Dendritic cell treated with granulocyte-macrophage colony-stimulating factor and Interleukin-4, amounts not matched to agents 40 ng/mL and 50 ng/mL, for 4 days (primary cell): ENCODE measurements at regions of chr11 and their contacts with region 1.

Region 1: GRCh38 chr11:30346068-30346688 is 23.3 kb downstream of the ARL14EP start:
- H3K4me3 Mint-ChIP-seq: no peak overlapping the region
- H3K27ac Mint-ChIP-seq: no peak overlapping the region
- H3K4me1 Mint-ChIP-seq: peaks cover 13% of the 10 kb centered on the region
- H3K27me3 Mint-ChIP-seq: no peaks in the 10 kb centered on the region

Region 2: GRCh38 chr11:30328681-30329080 is 17.5 kb before region 1 on chr11:
- intact Hi-C with region 1: loop called (anchors 2 kb)
- H3K4me3 Mint-ChIP-seq: no peak overlapping the region
- H3K27ac Mint-ChIP-seq: no peak overlapping the region
- H3K4me1 Mint-ChIP-seq: peaks cover 23% of the 10 kb centered on the region
- H3K27me3 Mint-ChIP-seq: no peaks in the 10 kb centered on the region

Region 3: DNA sequence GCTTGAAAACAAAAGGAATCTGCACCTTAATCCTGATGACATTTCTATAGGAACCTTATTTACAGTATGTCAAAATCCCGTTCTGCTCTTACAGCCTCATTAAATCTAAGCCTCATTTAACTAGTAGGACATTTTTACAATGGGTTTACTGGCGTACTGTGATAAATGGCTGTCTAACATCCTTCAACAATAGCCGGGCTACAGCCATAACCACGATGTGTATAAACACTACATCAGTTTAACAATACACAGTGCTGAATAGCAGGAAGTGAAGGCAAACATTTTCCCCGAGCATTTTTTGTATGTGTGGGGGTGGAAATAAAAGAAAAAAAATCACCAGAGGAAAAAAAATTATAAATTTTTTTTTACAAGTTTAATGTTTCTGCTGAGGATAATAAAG is 108.0 kb after region 1 on chr11:
- intact Hi-C with region 1: loop called (anchors 10 kb)
- H3K4me3 Mint-ChIP-seq: no peak overlapping the region
- H3K27ac Mint-ChIP-seq: peak overlapping the region; percentile 37
- H3K4me1 Mint-ChIP-seq: peaks cover 46% of the 10 kb centered on the region
- H3K27me3 Mint-ChIP-seq: peaks cover 14% of the 10 kb centered on the region

Region 4: GRCh38 chr11:30635401-30635989 is 289.3 kb after region 1 on chr11:
- intact Hi-C with region 1: no loop called
- H3K4me3 Mint-ChIP-seq: no peak overlapping the region
- H3K27ac Mint-ChIP-seq: no peak overlapping the region
- H3K4me1 Mint-ChIP-seq: no peaks in the 10 kb centered on the region
- H3K27me3 Mint-ChIP-seq: no peaks in the 10 kb centered on the region

Region 5: GRCh38 chr11:30855383-30856006 is 509.3 kb after region 1 on chr11:
- intact Hi-C with region 1: loop called (anchors 2 kb)
- H3K4me3 Mint-ChIP-seq: no peak overlapping the region
- H3K27ac Mint-ChIP-seq: no peak overlapping the region
- H3K4me1 Mint-ChIP-seq: no peaks in the 10 kb centered on the region
- H3K27me3 Mint-ChIP-seq: no peaks in the 10 kb centered on the region